ENCODE measurements at regions of chr5 and their contacts with region 1.

Region 1: GRCh38 chr5:43484106-43484849 is 613 bp upstream of the TMEM267 start:
- DNase-seq: peak; percentile 80
- H3K4me3 ChIP-seq: peak overlapping the region; percentile 88 to 94 (median 92)
- H3K27ac ChIP-seq: peak overlapping the region; percentile 90
- H3K4me1 ChIP-seq: peaks cover 4% of the 10 kb centered on the region
- H3K27me3 ChIP-seq: no peaks in the 10 kb centered on the region
- CTCF ChIP-seq: peak; percentile 71 to 73

Region 2: DNA sequence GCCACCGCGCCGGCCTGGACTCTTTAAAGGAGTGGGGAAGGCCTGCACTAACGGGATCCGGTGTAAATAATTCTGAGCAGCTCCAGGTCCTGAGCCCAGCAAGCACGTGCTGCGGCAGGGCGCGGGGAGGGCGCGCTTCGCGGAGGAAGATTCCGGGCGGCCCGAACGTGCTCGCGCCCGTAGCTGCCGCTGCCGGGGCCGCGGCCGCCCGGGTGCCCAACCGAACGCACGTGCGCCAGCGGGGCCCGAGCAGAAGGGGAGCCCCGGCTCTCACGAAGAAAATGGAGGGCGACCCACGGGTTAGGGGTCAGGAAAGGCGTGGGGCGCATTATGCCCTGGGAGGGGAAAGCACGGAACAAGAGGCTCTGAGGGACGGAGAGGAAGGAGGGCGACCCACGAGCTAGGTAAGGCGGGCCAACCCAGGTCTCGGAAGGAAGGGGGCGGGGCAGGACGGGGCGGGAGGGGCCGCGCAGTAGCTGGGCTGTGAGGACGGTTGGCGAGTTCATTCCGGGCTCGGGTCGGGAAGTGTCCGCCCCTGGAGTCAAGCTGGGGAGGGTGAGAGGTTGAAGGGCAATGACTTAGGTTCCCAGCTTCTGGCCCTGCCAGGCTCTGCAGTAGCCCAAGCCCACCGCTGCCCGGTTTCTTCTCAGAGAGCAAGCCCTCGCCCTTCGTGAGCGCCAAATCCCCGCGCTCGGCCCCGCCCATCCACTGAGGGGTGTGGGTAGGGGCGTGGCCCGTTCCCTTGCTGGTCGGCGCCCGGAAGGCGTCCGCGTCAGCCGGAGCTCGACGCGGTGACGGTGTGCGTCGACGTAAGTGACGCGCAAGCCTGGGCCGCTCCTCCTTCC is 363.3 kb before region 1 on chr5 and contains the start of gene ZNF131:
- CTCF ChIA-PET with region 1: no interaction called
- dilution Hi-C with region 1: no loop called
- in situ Hi-C with region 1: no loop called
- intact Hi-C with region 1: loop called (anchors 5 kb)
- DNase-seq: peak; percentile 96
- H3K4me3 ChIP-seq: peak within 1 kb of the TSS; percentile 68 to 88 (median 87)
- H3K27ac ChIP-seq: peak within 1 kb of the TSS; percentile 94
- H3K4me1 ChIP-seq: peaks cover 21% of the 10 kb centered on the region
- H3K27me3 ChIP-seq: no peaks in the 10 kb centered on the region
- CTCF ChIP-seq: no peak
- total RNA-seq, gene ZNF131: 28.7 to 36.2 TPM

Region 3: GRCh38 chr5:43227655-43228054 is 256.6 kb before region 1 on chr5:
- CTCF ChIA-PET with region 1: no interaction called
- dilution Hi-C with region 1: no loop called
- in situ Hi-C with region 1: no loop called
- intact Hi-C with region 1: loop called (anchors 2 kb)
- DNase-seq: peak; percentile 38
- H3K4me3 ChIP-seq: no peak overlapping the region
- H3K27ac ChIP-seq: no peak overlapping the region
- H3K4me1 ChIP-seq: no peaks in the 10 kb centered on the region
- H3K27me3 ChIP-seq: no peaks in the 10 kb centered on the region
- CTCF ChIP-seq: peak; percentile 51 to 55

Region 4: GRCh38 chr5:43313035-43313853 is 171.0 kb before region 1 on chr5 and contains the start of gene HMGCS1:
- CTCF ChIA-PET with region 1: interaction called, 10 read pairs
- dilution Hi-C with region 1: no loop called
- in situ Hi-C with region 1: no loop called
- intact Hi-C with region 1: loop called (anchors 10 kb)
- DNase-seq: peak; percentile 100
- H3K4me3 ChIP-seq: peak within 1 kb of the TSS; percentile 93 to 98 (median 97)
- H3K27ac ChIP-seq: peak within 1 kb of the TSS; percentile 97
- H3K4me1 ChIP-seq: peaks cover 46% of the 10 kb centered on the region
- H3K27me3 ChIP-seq: no peaks in the 10 kb centered on the region
- CTCF ChIP-seq: no peak
- total RNA-seq, gene HMGCS1: 68.8 to 218 TPM

Region 5: GRCh38 chr5:43400081-43400480 is 84.2 kb before region 1 on chr5:
- CTCF ChIA-PET with region 1: interaction called, 8 read pairs
- dilution Hi-C with region 1: no loop called
- in situ Hi-C with region 1: loop called in 1 of 2 experiments (anchors 10 kb)
- intact Hi-C with region 1: loop called (anchors 1 kb)
- DNase-seq: peak; percentile 12
- H3K4me3 ChIP-seq: no peak overlapping the region
- H3K27ac ChIP-seq: no peak overlapping the region
- H3K4me1 ChIP-seq: peaks cover 7% of the 10 kb centered on the region
- H3K27me3 ChIP-seq: no peaks in the 10 kb centered on the region
- CTCF ChIP-seq: peak; percentile 23 to 55

Region 6: DNA sequence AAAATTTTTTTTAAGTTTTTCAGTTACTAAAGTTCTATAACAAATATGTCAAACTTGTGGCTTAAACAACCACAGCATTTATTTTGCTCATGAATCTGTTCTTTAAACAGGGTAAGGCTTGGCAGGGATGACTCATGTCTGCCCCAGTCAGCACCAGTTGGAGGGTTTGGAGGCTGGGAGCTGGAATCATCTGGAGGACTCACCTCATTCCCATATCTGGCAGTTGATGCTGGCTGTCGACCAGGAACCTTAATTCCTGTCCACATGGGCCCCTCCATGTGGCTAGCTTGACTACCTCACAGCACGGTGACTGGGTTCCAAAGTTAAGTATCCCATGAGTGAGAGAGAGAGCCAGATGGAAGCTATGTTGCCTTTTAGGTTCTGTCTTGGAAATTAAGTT is 58.3 kb before region 1 on chr5:
- CTCF ChIA-PET with region 1: no interaction called
- dilution Hi-C with region 1: loop called (anchors 5 kb)
- in situ Hi-C with region 1: no loop called
- intact Hi-C with region 1: no loop called
- DNase-seq: peak; percentile 93
- H3K4me3 ChIP-seq: no peak overlapping the region
- H3K27ac ChIP-seq: peak overlapping the region; percentile 58
- H3K4me1 ChIP-seq: peaks cover 57% of the 10 kb centered on the region
- H3K27me3 ChIP-seq: no peaks in the 10 kb centered on the region
- CTCF ChIP-seq: no peak

Region 7: GRCh38 chr5:43514816-43515677 is 30.8 kb after region 1 on chr5 and contains the start of gene C5orf34:
- CTCF ChIA-PET with region 1: interaction called, 4 read pairs
- dilution Hi-C with region 1: no loop called
- in situ Hi-C with region 1: no loop called
- intact Hi-C with region 1: loop called (anchors 1 kb)
- DNase-seq: peak; percentile 94
- H3K4me3 ChIP-seq: peak within 1 kb of the TSS; percentile 83 to 99 (median 84)
- H3K27ac ChIP-seq: peak within 1 kb of the TSS; percentile 95
- H3K4me1 ChIP-seq: peaks cover 11% of the 10 kb centered on the region
- H3K27me3 ChIP-seq: no peaks in the 10 kb centered on the region
- CTCF ChIP-seq: peak in 1 of 2 donors; percentile 8
- total RNA-seq, gene C5orf34: 5.2 to 6.1 TPM

Measured in mammary epithelial cell (primary cell).